ENCODE measurements at regions of chr2 and their contacts with region 1.

Region 1: DNA sequence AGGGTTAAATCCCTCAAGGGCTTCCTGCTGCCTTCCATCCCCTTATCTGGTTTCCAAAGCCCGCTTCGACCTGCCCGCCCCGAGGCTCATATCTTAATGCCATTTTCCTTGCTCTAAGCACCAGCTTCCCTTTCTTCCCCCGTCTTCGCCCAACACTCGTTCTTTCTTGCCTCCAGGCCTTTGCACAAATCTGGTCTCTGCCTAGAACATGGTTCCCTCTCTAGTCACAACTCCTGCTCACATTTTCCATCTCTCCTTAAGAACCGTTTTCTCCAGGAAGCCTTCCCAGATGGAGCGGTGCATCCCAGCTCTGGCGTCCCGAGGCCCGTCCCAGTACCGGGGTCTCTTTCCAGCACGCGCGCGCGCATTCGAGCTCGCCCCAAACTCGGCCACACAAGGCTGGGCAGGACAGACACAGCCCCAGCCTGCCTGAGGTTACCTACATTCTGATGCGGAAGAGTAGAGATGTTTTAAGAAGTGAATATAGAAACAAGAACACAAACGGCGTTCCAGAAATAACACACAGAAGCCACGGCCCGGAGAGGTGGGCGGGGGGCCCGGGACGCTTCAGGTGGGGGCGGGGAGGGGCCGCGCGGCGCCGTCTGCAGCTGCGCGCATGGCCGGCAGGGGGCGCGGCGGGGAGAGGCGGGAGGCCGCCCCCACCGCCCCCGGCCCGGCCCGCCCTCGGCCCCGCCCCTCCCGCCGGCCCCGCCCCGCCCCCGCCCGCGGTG is at the start of gene DGKD:
- DNase-seq: peak; percentile 62 to 66
- ATAC-seq: peak; percentile 63
- total RNA-seq, gene DGKD: 91.3 to 93.2 TPM

Region 2: GRCh38 chr2:233443468-233444183 is 89.7 kb after region 1 on chr2:
- intact Hi-C with region 1: loop called in 1 of 2 experiments (anchors 5 kb)
- DNase-seq: peak; percentile 81 to 88
- ATAC-seq: peak; percentile 81

Region 3: GRCh38 chr2:233542507-233542906 is 188.6 kb after region 1 on chr2:
- intact Hi-C with region 1: no loop called
- DNase-seq: no peak
- ATAC-seq: no peak